Caco-2 (cell line): ENCODE measurements at regions of chr5 and their contacts with region 1.

Region 1: DNA sequence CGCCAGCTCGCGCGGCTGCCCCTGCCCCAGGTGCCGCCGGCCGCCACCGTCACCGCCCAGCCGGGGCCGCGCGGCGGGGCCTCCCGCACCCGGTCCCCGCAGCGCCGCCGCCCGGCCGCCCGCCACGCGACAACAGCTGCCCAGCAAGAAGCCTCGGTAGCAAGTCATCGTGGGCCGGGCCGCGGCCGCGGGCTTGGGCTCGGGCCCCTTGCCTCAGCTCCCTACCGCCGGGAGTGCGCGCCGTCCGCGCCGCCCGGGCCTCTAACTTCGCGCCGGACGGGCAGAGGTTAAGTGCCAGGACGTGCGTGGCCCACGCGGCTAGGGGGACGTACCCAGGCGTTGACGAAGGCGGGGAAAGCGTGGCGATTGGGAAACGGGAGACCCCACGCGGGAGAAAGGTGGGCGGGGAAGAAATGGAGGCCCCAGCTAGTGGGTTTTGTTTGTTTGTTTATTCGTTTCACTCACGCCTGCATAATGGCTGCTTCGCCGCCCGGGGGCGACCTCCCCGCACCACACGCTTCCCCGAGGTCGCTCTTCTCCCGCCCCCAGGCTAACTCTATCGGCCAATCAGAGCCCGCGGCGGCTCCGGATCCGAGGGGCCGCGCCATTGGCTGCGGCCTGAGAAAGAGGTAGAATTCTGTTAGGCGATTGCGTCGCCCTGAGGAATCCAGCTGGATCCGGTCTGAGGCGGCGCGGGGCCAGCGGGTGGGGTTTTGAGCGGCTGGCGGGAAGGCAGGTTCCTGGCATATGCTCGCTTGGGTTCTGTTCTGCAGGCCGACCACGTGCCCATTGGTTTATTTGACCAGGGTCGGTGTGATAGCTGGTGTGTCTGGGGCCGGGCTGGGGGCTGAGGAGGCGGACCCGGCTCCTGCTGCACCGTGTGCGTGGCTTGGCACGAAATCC is at the start of gene NADK2:
- DNase-seq: peak; percentile 97 to 98
- H3K4me3 ChIP-seq: peak within 1 kb of the TSS; percentile 90
- H3K4me3 Mint-ChIP-seq: peak within 1 kb of the TSS; percentile 87
- H3K27ac Mint-ChIP-seq: peak within 1 kb of the TSS; percentile 99
- H3K4me1 ChIP-seq: peaks cover 44% of the 10 kb centered on the region
- H3K4me1 Mint-ChIP-seq: peaks cover 50% of the 10 kb centered on the region
- H3K27me3 ChIP-seq: no peaks in the 10 kb centered on the region
- H3K27me3 Mint-ChIP-seq: no peaks in the 10 kb centered on the region
- CTCF ChIP-seq: peak; percentile 64 to 80
- total RNA-seq, gene NADK2: 71.6 and 79.4 TPM in 2 replicates

Region 2: GRCh38 chr5:36029914-36030313 is 212.0 kb before region 1 on chr5:
- CTCF ChIA-PET with region 1: no interaction called
- POLR2A ChIA-PET with region 1: no interaction called
- intact Hi-C with region 1: no loop called
- DNase-seq: no peak
- H3K4me3 ChIP-seq: no peak overlapping the region
- H3K4me3 Mint-ChIP-seq: no peak overlapping the region
- H3K27ac Mint-ChIP-seq: no peak overlapping the region
- H3K4me1 ChIP-seq: no peaks in the 10 kb centered on the region
- H3K4me1 Mint-ChIP-seq: no peaks in the 10 kb centered on the region
- H3K27me3 ChIP-seq: no peaks in the 10 kb centered on the region
- H3K27me3 Mint-ChIP-seq: peaks cover 2% of the 10 kb centered on the region
- CTCF ChIP-seq: no peak

Region 3: GRCh38 chr5:36079200-36079761 is 162.6 kb before region 1 on chr5:
- CTCF ChIA-PET with region 1: interaction called, 16 read pairs
- POLR2A ChIA-PET with region 1: interaction called, 3 read pairs
- intact Hi-C with region 1: no loop called
- DNase-seq: peak; percentile 68 to 71
- H3K4me3 ChIP-seq: no peak overlapping the region
- H3K4me3 Mint-ChIP-seq: no peak overlapping the region
- H3K27ac Mint-ChIP-seq: no peak overlapping the region
- H3K4me1 ChIP-seq: 0 out of 2 replicates have a peak, but pooled peaks cover 3% of the 10 kb centered on the region
- H3K4me1 Mint-ChIP-seq: no peaks in the 10 kb centered on the region
- H3K27me3 ChIP-seq: no peaks in the 10 kb centered on the region; the same call in 1 of the 2 replicates
- H3K27me3 Mint-ChIP-seq: peaks cover 11% of the 10 kb centered on the region
- CTCF ChIP-seq: peak; percentile 67 to 71

Region 4: GRCh38 chr5:36177715-36178523 is 64.0 kb before region 1 on chr5:
- CTCF ChIA-PET with region 1: interaction called, 7 read pairs
- POLR2A ChIA-PET with region 1: no interaction called
- intact Hi-C with region 1: loop called (anchors 1 kb)
- DNase-seq: peak in 1 of 2 experiments; percentile 24
- H3K4me3 ChIP-seq: no peak overlapping the region
- H3K4me3 Mint-ChIP-seq: no peak overlapping the region
- H3K27ac Mint-ChIP-seq: no peak overlapping the region
- H3K4me1 ChIP-seq: peaks cover 27% of the 10 kb centered on the region
- H3K4me1 Mint-ChIP-seq: peaks cover 44% of the 10 kb centered on the region
- H3K27me3 ChIP-seq: no peaks in the 10 kb centered on the region
- H3K27me3 Mint-ChIP-seq: no peaks in the 10 kb centered on the region
- CTCF ChIP-seq: peak; percentile 50 to 61

Region 5: DNA sequence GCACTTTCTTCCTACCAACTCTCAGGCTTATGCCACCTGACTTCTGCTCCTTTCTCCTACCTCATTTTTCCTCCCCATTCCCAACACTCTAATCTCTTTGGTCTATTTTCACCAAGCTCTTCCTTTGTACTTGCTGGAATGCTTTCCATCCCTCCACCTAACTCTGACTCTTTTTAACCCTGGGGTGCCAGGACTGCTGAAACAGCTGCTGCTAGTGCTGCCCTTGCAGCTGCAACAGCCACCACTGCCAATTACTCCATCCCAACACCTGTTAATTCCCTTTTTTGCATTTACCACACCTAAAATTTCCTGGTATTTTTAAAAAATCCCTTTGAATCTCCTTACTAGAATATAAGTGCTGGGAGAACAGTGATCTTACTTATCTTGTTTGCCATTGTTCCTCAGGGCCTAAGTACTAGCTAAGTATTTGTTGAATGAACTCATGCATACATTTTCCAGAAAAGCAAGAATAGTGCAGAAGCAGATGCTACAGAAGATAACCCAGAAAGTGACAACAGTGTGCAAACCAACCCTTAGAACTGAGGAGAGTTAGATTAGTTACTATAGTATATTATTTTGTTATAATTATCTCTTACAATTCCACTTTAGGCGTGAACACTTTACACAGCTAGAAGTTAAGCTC is 11.6 kb before region 1 on chr5:
- CTCF ChIA-PET with region 1: interaction called, 4 read pairs
- POLR2A ChIA-PET with region 1: interaction called, 7 read pairs
- intact Hi-C with region 1: loop called (anchors 1 kb)
- DNase-seq: no peak
- H3K4me3 ChIP-seq: no peak overlapping the region
- H3K4me3 Mint-ChIP-seq: peak overlapping the region; percentile 29
- H3K27ac Mint-ChIP-seq: peak overlapping the region; percentile 57
- H3K4me1 ChIP-seq: peaks cover 46% of the 10 kb centered on the region
- H3K4me1 Mint-ChIP-seq: peaks cover 31% of the 10 kb centered on the region
- H3K27me3 ChIP-seq: no peaks in the 10 kb centered on the region
- H3K27me3 Mint-ChIP-seq: no peaks in the 10 kb centered on the region
- CTCF ChIP-seq: no peak

Region 6: GRCh38 chr5:36305571-36306326 is 63.9 kb after region 1 on chr5:
- CTCF ChIA-PET with region 1: interaction called, 4 read pairs
- POLR2A ChIA-PET with region 1: interaction called, 4 read pairs
- intact Hi-C with region 1: loop called (anchors 1 kb)
- DNase-seq: peak in 1 of 2 experiments; percentile 59
- H3K4me3 ChIP-seq: no peak overlapping the region
- H3K4me3 Mint-ChIP-seq: no peak overlapping the region
- H3K27ac Mint-ChIP-seq: no peak overlapping the region
- H3K4me1 ChIP-seq: peaks cover 19% of the 10 kb centered on the region
- H3K4me1 Mint-ChIP-seq: peaks cover 13% of the 10 kb centered on the region
- H3K27me3 ChIP-seq: no peaks in the 10 kb centered on the region
- H3K27me3 Mint-ChIP-seq: no peaks in the 10 kb centered on the region
- CTCF ChIP-seq: peak; percentile 55 to 72

Region 7: DNA sequence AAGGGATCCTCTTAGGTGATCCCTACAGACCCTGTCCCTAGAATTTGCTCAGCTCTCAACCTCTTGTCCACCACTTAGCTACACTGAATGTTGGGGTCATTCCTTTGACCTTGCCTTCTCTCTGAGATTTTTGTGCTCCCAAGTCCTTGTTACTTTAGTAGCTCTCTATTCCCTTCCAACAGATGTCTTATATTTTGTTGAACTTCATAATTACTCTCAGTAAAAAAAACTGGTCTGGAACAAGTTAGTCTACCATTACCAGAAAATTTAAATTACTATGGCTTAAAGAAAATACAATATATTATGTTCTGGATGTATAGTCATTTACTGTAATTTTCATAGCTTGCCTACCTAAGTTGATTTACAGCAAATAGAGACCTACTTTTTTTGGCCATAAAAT is 83.3 kb after region 1 on chr5:
- CTCF ChIA-PET with region 1: no interaction called
- POLR2A ChIA-PET with region 1: no interaction called
- intact Hi-C with region 1: no loop called
- DNase-seq: no peak
- H3K4me3 ChIP-seq: no peak overlapping the region
- H3K4me3 Mint-ChIP-seq: no peak overlapping the region
- H3K27ac Mint-ChIP-seq: no peak overlapping the region
- H3K4me1 ChIP-seq: no peaks in the 10 kb centered on the region
- H3K4me1 Mint-ChIP-seq: no peaks in the 10 kb centered on the region
- H3K27me3 ChIP-seq: no peaks in the 10 kb centered on the region
- H3K27me3 Mint-ChIP-seq: no peaks in the 10 kb centered on the region
- CTCF ChIP-seq: no peak

Region 8: GRCh38 chr5:36646507-36647023 is 404.7 kb after region 1 on chr5:
- CTCF ChIA-PET with region 1: no interaction called
- POLR2A ChIA-PET with region 1: no interaction called
- intact Hi-C with region 1: loop called (anchors 5 kb)
- DNase-seq: peak in 1 of 2 experiments; percentile 33
- H3K4me3 ChIP-seq: no peak overlapping the region
- H3K4me3 Mint-ChIP-seq: peak overlapping the region; percentile 53
- H3K27ac Mint-ChIP-seq: peak overlapping the region; percentile 81
- H3K4me1 ChIP-seq: peaks cover 91% of the 10 kb centered on the region
- H3K4me1 Mint-ChIP-seq: peaks cover 42% of the 10 kb centered on the region
- H3K27me3 ChIP-seq: no peaks in the 10 kb centered on the region
- H3K27me3 Mint-ChIP-seq: no peaks in the 10 kb centered on the region
- CTCF ChIP-seq: no peak